K562 (cell line): ENCODE measurements at regions of chr4 and their contacts with region 1.

Region 1: GRCh38 chr4:181143250-181143854 is 1099.8 kb upstream of the TENM3 start:
- DNase-seq: peak; percentile 44 to 79 (median 46)
- ATAC-seq: peak; percentile 87
- H3K4me3 ChIP-seq: no peak overlapping the region
- H3K27ac ChIP-seq: no peak overlapping the region
- H3K4me1 ChIP-seq: no peaks in the 10 kb centered on the region
- H3K27me3 ChIP-seq: no peaks in the 10 kb centered on the region
- CTCF ChIP-seq: peak; percentile 71 to 85 (median 71)
- EP300 ChIP-seq: no peak
- POLR2A ChIP-seq: no peak
- RAD21 ChIP-seq: peak; percentile 60 to 79

Region 2: DNA sequence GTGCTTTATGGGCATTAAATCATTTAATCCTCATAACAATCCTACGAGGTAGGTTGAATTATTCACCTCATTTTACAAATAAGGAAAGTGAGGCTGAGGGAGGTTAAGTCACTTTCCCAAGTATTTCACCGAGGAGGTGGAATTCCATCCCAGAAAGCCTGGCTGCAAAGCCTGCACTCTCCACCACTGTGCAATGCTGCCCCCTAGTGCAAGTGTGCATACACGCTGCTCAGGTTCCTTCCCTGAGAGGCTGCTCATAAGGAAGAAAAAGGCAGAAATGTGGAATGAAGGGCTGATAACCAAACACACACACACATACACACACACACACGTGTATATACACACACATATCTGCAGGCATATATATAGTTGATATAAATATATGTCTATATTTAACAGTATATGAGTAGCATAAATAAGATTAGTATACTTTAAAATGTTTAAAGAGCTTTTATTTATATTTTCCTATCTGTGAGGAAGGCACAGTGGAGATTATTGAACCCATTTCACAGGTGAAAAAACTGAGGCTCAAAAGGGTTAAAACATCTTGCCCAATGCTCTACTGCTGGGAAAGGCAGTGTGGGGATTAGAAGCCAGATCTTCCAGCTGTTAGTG is 385.3 kb after region 1 on chr4:
- CTCF ChIA-PET with region 1: interaction called, 3 read pairs
- POLR2A ChIA-PET with region 1: no interaction called
- in situ Hi-C with region 1: loop called (anchors 10 kb)
- intact Hi-C with region 1: loop called (anchors 1 kb)
- DNase-seq: peak; percentile 18 to 59 (median 34)
- ATAC-seq: peak; percentile 75; the same call in 2 of the 3 replicates
- H3K4me3 ChIP-seq: no peak overlapping the region
- H3K27ac ChIP-seq: no peak overlapping the region
- H3K4me1 ChIP-seq: no peaks in the 10 kb centered on the region
- H3K27me3 ChIP-seq: no peaks in the 10 kb centered on the region
- CTCF ChIP-seq: peak; percentile 52 to 65 (median 59)
- EP300 ChIP-seq: no peak
- POLR2A ChIP-seq: no peak
- RAD21 ChIP-seq: peak; percentile 58 to 71

Region 3: DNA sequence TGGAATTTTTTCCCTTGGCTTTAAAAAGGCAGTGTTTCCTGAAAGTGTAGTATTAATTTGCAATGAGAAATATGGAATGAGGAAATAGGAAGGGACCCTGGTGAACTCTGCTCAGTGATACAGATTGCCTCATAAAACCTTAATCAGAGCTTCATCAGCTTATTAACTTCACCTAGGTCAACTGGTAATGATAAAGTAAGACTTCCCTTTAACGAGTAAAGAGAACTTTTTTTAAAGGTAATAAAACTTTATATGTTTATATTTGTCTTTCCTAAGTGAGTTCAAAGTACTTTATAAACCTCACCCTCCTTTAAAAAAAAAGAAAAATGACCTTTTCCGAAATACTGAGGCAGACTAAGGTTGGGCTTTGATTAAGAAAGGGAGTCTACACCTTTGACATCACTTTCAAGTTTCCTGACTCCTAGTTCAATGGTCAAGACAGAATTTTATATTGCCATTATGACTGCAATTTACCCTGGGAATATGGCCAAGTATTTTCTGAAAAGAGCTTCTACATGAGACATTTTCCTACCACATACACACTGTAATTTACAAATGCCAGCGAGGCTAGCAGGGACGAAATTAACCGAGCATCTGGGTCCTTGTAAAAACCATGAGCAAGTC is 393.6 kb after region 1 on chr4:
- CTCF ChIA-PET with region 1: no interaction called
- POLR2A ChIA-PET with region 1: no interaction called
- in situ Hi-C with region 1: loop called (anchors 10 kb)
- intact Hi-C with region 1: no loop called
- DNase-seq: no peak
- ATAC-seq: no peak
- H3K4me3 ChIP-seq: no peak overlapping the region
- H3K27ac ChIP-seq: no peak overlapping the region
- H3K4me1 ChIP-seq: no peaks in the 10 kb centered on the region
- H3K27me3 ChIP-seq: no peaks in the 10 kb centered on the region
- CTCF ChIP-seq: no peak
- EP300 ChIP-seq: no peak
- POLR2A ChIP-seq: no peak
- RAD21 ChIP-seq: no peak

Region 4: GRCh38 chr4:182806259-182807252 is 1663.2 kb after region 1 on chr4:
- CTCF ChIA-PET with region 1: interaction called, 3 read pairs
- POLR2A ChIA-PET with region 1: no interaction called
- in situ Hi-C with region 1: no loop called
- intact Hi-C with region 1: loop called (anchors 2 kb)
- DNase-seq: peak; percentile 70 to 77 (median 76)
- ATAC-seq: peak; percentile 99
- H3K4me3 ChIP-seq: no peak overlapping the region
- H3K27ac ChIP-seq: no peak overlapping the region
- H3K4me1 ChIP-seq: peaks cover 0 to 19% of the 10 kb centered on the region in 2 experiments; a peak in 3 of 5 replicates
- H3K27me3 ChIP-seq: peaks cover 11 to 28% of the 10 kb centered on the region in 2 experiments; a peak in 3 of 5 replicates
- CTCF ChIP-seq: peak; percentile 81 to 95 (median 83)
- EP300 ChIP-seq: no peak
- POLR2A ChIP-seq: no peak
- RAD21 ChIP-seq: peak; percentile 56 to 79

Region 5: DNA sequence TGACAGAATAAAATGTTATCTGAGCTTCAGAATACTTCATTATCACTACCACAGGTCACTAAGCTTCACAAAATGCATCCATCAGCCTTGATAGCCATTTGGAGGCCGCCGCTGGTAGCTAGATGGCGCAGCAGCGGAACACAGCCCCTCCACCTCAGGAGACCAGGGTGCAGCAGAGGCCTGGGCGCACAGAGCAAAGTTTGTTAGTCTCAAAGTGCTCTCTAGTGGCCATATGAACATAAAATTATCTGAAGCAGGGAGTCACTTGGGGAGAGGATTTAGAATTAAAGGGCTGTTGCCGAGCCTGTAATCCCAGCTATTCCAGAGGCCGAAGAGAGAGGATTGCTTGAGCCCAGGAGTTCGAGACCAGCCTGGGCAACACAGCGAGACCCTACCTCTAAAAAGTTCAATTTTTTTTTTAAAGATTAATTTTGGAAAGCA is 1782.0 kb after region 1 on chr4:
- CTCF ChIA-PET with region 1: no interaction called
- POLR2A ChIA-PET with region 1: no interaction called
- in situ Hi-C with region 1: no loop called
- intact Hi-C with region 1: loop called (anchors 1 kb)
- DNase-seq: peak; percentile 48 to 90 (median 63)
- ATAC-seq: peak; percentile 99
- H3K4me3 ChIP-seq: no peak overlapping the region
- H3K27ac ChIP-seq: no peak overlapping the region
- H3K4me1 ChIP-seq: peaks cover 0 to 3% of the 10 kb centered on the region in 2 experiments; a peak in 1 of 5 replicates
- H3K27me3 ChIP-seq: no peaks in the 10 kb centered on the region
- CTCF ChIP-seq: peak; percentile 95 to 98 (median 98)
- EP300 ChIP-seq: no peak
- POLR2A ChIP-seq: no peak
- RAD21 ChIP-seq: peak; percentile 82 to 84